ENCODE measurements at regions of chr4 and their contacts with region 1.

Region 1: DNA sequence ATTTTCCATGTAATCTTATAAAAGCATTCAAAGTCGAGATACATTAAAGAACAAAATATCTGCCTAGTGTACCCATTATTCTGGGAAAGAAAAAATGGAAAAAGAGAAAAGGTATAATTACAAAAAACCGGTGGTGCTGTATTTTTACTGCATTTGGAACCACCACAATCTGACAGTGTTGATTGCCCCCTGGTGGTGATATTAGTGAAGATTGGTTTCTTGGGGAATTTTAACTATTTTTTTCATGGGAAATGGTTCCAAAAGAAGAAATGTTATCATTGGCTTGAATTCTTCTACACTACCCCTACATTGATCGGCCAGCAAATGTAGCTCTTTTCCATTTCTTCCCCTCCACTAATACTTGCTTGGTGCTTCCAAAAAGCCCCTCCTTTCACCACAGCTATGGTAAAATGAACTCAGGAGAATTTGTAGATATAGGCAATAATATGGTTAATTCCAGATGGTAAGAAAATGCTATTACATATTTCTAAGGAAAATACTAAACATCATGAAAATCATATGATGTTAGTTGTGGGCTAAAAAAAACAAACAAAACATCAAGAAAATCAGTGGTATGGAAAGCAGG is 50.0 kb downstream of the COX18 start:
- DNase-seq: no peak
- H3K4me3 ChIP-seq: no peak overlapping the region
- H3K27ac ChIP-seq: no peak overlapping the region
- H3K4me1 ChIP-seq: no peaks in the 10 kb centered on the region
- H3K27me3 ChIP-seq: no peaks in the 10 kb centered on the region
- CTCF ChIP-seq: peak in 3 of 4 experiments; percentile 48 to 72 (median 65)
- EP300 ChIP-seq: no peak
- POLR2A ChIP-seq: no peak

Region 2: GRCh38 chr4:72505314-72505744 is 514.2 kb before region 1 on chr4:
- intact Hi-C with region 1: loop called (anchors 2 kb)
- DNase-seq: no peak
- H3K4me3 ChIP-seq: no peak overlapping the region
- H3K27ac ChIP-seq: no peak overlapping the region
- H3K4me1 ChIP-seq: no peaks in the 10 kb centered on the region
- H3K27me3 ChIP-seq: no peaks in the 10 kb centered on the region
- CTCF ChIP-seq: peak in 3 of 4 experiments; percentile 30 to 60 (median 46)
- EP300 ChIP-seq: no peak
- POLR2A ChIP-seq: no peak

Region 3: DNA sequence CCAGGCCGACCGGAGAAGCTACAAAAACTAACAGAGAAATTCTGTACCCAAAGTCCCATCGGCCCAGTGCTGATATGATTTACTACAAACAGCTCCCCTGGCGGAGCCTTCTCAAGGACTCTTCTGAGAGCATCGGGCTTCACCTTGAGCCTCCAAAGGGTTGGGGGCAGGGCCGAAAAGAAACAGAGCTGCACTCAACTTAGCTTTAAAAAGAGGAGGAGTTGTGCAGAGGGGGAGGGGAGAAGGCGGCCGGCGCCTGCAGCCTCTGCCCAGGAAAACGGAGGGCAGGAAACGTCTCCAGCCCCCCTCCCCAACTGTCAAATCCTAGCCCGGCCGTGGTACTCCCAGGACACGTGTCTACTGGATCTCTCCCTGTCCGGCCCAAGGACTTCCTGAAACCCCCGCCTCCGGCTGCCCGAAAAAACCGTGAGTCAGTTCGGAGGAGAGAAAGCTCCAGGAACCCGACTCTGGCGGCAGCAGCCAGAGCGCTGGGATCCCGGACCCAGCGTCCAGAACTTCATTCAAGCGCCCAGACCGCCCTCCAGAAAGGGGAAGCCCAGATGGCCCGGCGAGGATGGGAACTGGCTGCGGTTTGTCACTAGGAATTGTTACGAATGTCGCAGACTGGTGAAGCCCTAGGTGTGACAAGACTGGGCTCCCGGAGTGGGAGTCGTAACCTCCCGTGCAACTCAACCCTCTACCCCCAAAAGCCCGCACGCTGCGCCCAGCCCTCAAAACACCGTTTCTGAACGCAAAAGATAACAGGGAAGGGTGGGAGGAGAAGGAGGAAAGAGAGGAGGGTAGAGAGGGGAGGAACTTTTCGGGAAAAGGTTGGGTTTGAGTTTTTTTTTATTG is 451.5 kb before region 1 on chr4:
- intact Hi-C with region 1: no loop called
- DNase-seq: peak; percentile 87
- H3K4me3 ChIP-seq: peak overlapping the region; percentile 35 to 67 (median 61)
- H3K27ac ChIP-seq: peak overlapping the region; percentile 76 to 84 (median 81)
- H3K4me1 ChIP-seq: peaks cover 0 to 18% (median 4%) of the 10 kb centered on the region in 4 donors
- H3K27me3 ChIP-seq: no peaks in the 10 kb centered on the region
- CTCF ChIP-seq: peak in 2 of 4 experiments; percentile 9 to 24
- EP300 ChIP-seq: no peak
- POLR2A ChIP-seq: no peak

Region 4: DNA sequence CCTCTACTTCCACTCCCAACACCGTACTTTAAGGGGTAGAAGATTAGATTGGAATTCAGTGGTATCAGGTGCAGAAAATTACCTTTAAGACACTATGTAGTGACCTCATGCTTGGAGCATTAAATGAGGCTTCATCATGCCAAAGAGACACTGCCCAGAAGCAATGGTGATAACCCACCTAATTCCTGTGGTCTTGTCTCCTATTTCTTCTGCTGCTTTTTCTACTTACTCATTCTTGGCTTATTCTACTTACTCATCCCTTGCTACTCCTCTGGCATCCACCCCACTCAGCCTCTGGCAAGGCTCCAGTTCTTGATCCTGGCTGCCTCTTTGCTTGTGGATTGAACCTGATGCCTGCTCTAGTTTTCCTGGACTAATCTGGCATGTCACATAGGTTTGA is 388.3 kb before region 1 on chr4:
- intact Hi-C with region 1: no loop called
- DNase-seq: peak; percentile 67
- H3K4me3 ChIP-seq: no peak overlapping the region
- H3K27ac ChIP-seq: no peak overlapping the region
- H3K4me1 ChIP-seq: no peaks in the 10 kb centered on the region
- H3K27me3 ChIP-seq: no peaks in the 10 kb centered on the region
- CTCF ChIP-seq: no peak
- EP300 ChIP-seq: no peak
- POLR2A ChIP-seq: no peak

Region 5: DNA sequence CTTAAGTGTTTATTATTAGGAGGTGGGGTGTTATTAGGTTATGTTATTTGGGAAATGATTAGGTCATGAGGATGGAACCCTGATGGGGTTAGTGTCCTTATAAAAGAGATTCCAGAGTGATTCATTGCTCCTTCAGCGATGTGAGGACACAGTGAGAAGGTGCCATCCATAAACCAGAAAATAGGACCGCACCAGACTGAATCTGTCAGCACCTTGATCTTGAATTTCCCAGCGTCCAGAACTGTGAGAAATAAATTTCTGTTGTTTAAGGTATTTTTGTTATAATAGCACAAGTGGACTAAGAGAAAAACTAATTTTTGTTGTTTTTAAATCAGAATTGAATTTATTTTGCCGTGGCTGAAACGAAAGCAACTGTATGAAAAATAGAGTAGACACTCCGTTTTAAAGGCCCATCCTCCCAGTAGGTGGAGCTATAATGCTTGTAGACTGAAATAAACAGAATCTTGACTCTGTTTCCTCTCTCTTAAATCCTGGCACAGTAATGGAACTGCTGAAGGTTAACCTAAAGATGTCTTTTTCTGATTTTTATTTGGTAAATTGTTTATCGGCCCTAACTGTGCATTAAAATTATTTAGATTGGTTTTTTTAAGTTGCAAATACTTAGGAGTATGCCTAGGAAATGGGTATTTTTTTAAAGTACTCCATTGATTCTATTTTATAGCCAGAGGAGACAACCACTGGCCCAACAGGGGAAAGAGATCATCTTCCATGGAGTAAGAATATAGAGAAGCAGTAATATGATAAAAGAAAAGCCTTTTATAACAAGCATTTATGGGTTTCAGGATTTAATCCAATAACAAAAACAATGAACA is 317.4 kb before region 1 on chr4:
- intact Hi-C with region 1: loop called (anchors 5 kb)
- DNase-seq: no peak
- H3K4me3 ChIP-seq: peak overlapping the region in 3 of 4 donors; percentile 8 to 34 (median 32)
- H3K27ac ChIP-seq: no peak overlapping the region
- H3K4me1 ChIP-seq: no peaks in the 10 kb centered on the region
- H3K27me3 ChIP-seq: no peaks in the 10 kb centered on the region
- CTCF ChIP-seq: peak in 2 of 4 experiments; percentile 24 to 45
- EP300 ChIP-seq: no peak
- POLR2A ChIP-seq: no peak

Measured in sigmoid colon (tissue), 7 donors.